CD4-positive, alpha-beta memory T cell (primary cell): ENCODE measurements at regions of chr9 and their contacts with region 1.

Region 1: DNA sequence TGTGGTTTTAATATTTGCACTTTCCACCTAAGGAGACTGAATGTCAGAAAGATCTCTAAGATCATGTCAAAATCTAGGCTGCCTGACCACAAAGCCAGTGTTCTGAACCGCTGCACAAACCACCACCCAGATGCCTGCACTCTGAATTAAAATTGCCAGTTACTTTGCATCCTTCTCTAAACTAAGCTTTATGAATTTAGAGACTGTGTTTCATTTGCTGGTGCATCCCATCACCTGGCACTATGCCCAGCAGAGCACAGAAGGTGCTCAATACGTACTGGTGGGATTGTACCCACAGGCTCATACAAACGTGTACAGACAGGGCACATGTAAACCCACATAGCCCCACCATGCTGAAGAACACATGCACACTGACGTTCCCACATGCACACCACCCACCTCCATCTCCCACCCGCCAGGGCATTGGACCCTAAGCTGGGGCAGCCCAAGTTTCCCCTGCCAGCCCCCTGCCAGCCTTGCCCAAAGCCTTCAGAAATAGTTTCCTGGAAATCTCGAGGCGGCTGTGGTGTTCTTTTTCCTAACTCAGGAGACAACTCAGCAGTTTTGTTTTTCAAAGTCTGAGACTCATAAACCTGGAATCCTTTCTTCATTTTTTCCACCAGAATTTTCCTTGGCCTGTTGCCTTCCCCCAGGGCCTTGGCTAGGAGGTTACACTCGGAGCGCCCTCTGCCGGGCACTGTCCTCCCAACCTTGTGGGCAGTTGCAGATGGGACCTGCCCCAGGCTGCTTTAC is 9.6 kb upstream of the TRAF1 start:
- DNase-seq: peak; percentile 78 to 85 (median 80)
- H3K4me3 ChIP-seq: peak overlapping the region in 1 of 2 donors; percentile 36
- H3K4me3 Mint-ChIP-seq: peak overlapping the region; percentile 24 to 76 (median 68)
- H3K27ac ChIP-seq: peak overlapping the region; percentile 66
- H3K27ac Mint-ChIP-seq: peak overlapping the region; percentile 89 to 97 (median 96)
- H3K4me1 ChIP-seq: peaks cover 61% of the 10 kb centered on the region
- H3K4me1 Mint-ChIP-seq: peaks cover 43 to 66% (median 54%) of the 10 kb centered on the region in 4 donors
- H3K27me3 ChIP-seq: no peaks in the 10 kb centered on the region
- H3K27me3 Mint-ChIP-seq: no peaks in the 10 kb centered on the region

Region 2: DNA sequence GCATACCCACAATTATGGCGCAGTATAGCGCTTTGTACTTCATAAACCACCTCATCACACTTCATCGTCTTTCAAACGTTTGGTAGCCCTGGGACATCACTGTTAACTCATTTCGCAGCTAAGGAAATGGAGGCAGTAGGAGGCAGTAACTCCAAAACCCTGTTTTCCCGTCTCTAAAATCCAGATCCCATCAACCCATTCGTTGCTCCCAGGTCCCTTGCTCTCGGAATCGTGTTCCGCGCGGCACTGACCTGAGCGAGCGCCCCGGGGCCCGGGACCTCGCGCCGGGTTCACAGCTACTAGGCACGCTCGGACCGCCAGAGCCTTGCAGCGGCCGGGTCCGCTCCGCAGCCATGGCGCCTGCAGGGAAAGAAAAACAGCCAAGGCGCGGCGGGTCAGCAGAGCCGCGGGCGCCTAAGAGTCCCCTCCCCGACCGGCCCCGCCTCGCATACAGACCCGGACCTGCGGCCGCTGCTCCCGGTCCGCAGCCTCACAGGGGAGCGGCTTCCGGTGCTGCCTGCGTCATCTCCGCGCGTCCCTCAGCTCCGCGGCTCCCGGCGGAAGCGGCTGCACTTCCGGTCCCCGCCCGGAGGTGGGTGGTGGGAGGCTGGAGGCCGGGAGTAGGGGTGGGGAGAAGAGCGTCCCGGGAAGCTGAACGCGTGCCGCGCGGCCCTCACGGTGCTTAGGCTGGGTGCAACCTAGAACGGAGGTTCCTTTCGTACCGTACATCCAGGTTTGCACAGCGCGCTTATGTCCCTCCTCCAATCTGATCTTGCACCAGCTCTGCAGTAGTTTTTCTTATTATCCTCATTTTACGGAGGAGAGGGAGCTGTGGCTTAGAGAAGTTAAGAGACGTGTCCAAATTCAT is 143.1 kb before region 1 on chr9 and contains the start of gene FBXW2:
- CTCF ChIA-PET with region 1: interaction called, 18 read pairs
- POLR2A ChIA-PET with region 1: interaction called, 11 read pairs
- intact Hi-C with region 1: loop called (anchors 2 kb)
- DNase-seq: peak; percentile 74 to 83 (median 78)
- H3K4me3 ChIP-seq: peak within 1 kb of the TSS; percentile 82 to 94
- H3K4me3 Mint-ChIP-seq: peak within 1 kb of the TSS; percentile 89 to 98 (median 92)
- H3K27ac ChIP-seq: peak within 1 kb of the TSS; percentile 77
- H3K27ac Mint-ChIP-seq: peak within 1 kb of the TSS; percentile 90 to 97 (median 93)
- H3K4me1 ChIP-seq: peaks cover 58% of the 10 kb centered on the region
- H3K4me1 Mint-ChIP-seq: peaks cover 39 to 62% (median 50%) of the 10 kb centered on the region in 4 donors
- H3K27me3 ChIP-seq: no peaks in the 10 kb centered on the region
- H3K27me3 Mint-ChIP-seq: no peaks in the 10 kb centered on the region
- total RNA-seq, gene FBXW2: 73.7 to 77.8 TPM

Region 3: GRCh38 chr9:120875954-120876841 is 60.0 kb before region 1 on chr9:
- CTCF ChIA-PET with region 1: interaction called, 254 read pairs
- POLR2A ChIA-PET with region 1: interaction called, 5,577 read pairs
- intact Hi-C with region 1: loop called (anchors 1 kb)
- DNase-seq: peak; percentile 61 to 89 (median 67)
- H3K4me3 ChIP-seq: peak overlapping the region; percentile 67 to 83
- H3K4me3 Mint-ChIP-seq: peak overlapping the region; percentile 81 to 91 (median 85)
- H3K27ac ChIP-seq: peak overlapping the region; percentile 78
- H3K27ac Mint-ChIP-seq: peak overlapping the region; percentile 85 to 98 (median 93)
- H3K4me1 ChIP-seq: peaks cover 73% of the 10 kb centered on the region
- H3K4me1 Mint-ChIP-seq: peaks cover 61 to 80% (median 66%) of the 10 kb centered on the region in 4 donors
- H3K27me3 ChIP-seq: no peaks in the 10 kb centered on the region
- H3K27me3 Mint-ChIP-seq: no peaks in the 10 kb centered on the region

Region 4: DNA sequence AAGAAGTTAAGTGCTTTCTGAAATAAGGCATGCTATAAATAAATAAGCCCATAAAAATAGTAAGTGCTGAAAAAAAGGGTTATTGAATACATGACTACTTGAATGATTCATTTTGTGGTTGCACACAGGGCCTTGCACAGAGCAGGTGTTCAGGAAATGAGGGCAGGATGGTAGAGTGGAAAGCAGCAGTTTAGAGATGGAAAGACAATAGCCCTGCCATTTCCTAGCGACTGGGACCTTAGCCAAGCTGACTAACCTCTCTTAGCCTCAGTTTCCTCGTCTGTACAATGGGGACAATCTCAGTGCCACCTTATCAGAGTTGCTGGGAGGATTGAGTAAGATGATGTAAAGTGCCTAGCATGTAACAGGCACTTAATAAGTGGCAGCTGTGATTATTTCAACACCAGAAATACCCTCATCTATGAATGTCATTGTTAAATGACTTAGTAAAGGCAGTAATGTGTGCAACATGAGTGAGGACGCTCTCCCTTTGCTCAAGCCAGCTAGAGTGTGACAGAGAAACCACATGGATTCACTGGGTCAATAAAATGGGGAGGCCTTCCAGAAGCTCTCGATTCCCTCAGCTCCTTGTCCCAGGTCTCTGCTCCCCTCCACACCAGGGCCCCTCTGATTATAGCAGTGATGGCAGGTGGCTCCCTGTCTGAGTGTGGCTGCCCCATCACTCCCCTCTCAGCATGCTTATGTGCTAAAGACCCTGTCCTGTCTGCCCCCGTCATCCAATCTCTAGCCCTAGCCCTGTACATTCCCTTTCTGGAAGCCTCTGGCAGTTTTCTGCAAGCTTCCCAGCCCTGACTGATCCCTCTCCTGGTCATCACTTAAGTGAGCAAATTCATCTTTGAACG is 43.2 kb before region 1 on chr9:
- CTCF ChIA-PET with region 1: interaction called, 48 read pairs
- POLR2A ChIA-PET with region 1: interaction called, 5,577 read pairs
- intact Hi-C with region 1: loop called (anchors 1 kb)
- DNase-seq: peak; percentile 69 to 93 (median 75)
- H3K4me3 ChIP-seq: peak overlapping the region in 1 of 2 donors; percentile 41
- H3K4me3 Mint-ChIP-seq: peak overlapping the region; percentile 8 to 82 (median 68)
- H3K27ac ChIP-seq: peak overlapping the region; percentile 76
- H3K27ac Mint-ChIP-seq: peak overlapping the region; percentile 86 to 100 (median 98)
- H3K4me1 ChIP-seq: peaks cover 95% of the 10 kb centered on the region
- H3K4me1 Mint-ChIP-seq: peaks cover 49 to 92% (median 71%) of the 10 kb centered on the region in 4 donors
- H3K27me3 ChIP-seq: no peaks in the 10 kb centered on the region
- H3K27me3 Mint-ChIP-seq: no peaks in the 10 kb centered on the region

Region 5: GRCh38 chr9:120909904-120910303 is 26.3 kb before region 1 on chr9:
- CTCF ChIA-PET with region 1: interaction called, 16 read pairs
- POLR2A ChIA-PET with region 1: interaction called, 5,577 read pairs
- intact Hi-C with region 1: loop called (anchors 1 kb)
- DNase-seq: peak in 1 of 5 donors; percentile 90
- H3K4me3 ChIP-seq: no peak overlapping the region
- H3K4me3 Mint-ChIP-seq: peak overlapping the region in 5 of 8 donors; percentile 17 to 55 (median 34)
- H3K27ac ChIP-seq: peak overlapping the region; percentile 70
- H3K27ac Mint-ChIP-seq: peak overlapping the region; percentile 53 to 88 (median 80)
- H3K4me1 ChIP-seq: peaks cover 85% of the 10 kb centered on the region
- H3K4me1 Mint-ChIP-seq: peaks cover 48 to 88% (median 71%) of the 10 kb centered on the region in 4 donors
- H3K27me3 ChIP-seq: no peaks in the 10 kb centered on the region
- H3K27me3 Mint-ChIP-seq: no peaks in the 10 kb centered on the region

Region 6: GRCh38 chr9:121059998-121060636 is 123.9 kb after region 1 on chr9:
- CTCF ChIA-PET with region 1: interaction called, 6 read pairs
- POLR2A ChIA-PET with region 1: no interaction called
- intact Hi-C with region 1: loop called (anchors 5 kb)
- DNase-seq: peak in 4 of 5 donors; percentile 48 to 57 (median 50)
- H3K4me3 ChIP-seq: no peak overlapping the region
- H3K4me3 Mint-ChIP-seq: no peak overlapping the region
- H3K27ac ChIP-seq: no peak overlapping the region
- H3K27ac Mint-ChIP-seq: peak overlapping the region in 1 of 7 donors; percentile 20
- H3K4me1 ChIP-seq: peaks cover 27% of the 10 kb centered on the region
- H3K4me1 Mint-ChIP-seq: peaks cover 16 to 18% (median 17%) of the 10 kb centered on the region in 4 donors
- H3K27me3 ChIP-seq: no peaks in the 10 kb centered on the region
- H3K27me3 Mint-ChIP-seq: no peaks in the 10 kb centered on the region